Sciatic nerve (tissue), 2 donors: ENCODE measurements at regions of chr1 and their contacts with region 1.

Region 1: GRCh38 chr1:23825762-23826522 is 713 bp upstream of the HMGCL start:
- DNase-seq: no peak
- ATAC-seq: peak; percentile 14

Region 2: DNA sequence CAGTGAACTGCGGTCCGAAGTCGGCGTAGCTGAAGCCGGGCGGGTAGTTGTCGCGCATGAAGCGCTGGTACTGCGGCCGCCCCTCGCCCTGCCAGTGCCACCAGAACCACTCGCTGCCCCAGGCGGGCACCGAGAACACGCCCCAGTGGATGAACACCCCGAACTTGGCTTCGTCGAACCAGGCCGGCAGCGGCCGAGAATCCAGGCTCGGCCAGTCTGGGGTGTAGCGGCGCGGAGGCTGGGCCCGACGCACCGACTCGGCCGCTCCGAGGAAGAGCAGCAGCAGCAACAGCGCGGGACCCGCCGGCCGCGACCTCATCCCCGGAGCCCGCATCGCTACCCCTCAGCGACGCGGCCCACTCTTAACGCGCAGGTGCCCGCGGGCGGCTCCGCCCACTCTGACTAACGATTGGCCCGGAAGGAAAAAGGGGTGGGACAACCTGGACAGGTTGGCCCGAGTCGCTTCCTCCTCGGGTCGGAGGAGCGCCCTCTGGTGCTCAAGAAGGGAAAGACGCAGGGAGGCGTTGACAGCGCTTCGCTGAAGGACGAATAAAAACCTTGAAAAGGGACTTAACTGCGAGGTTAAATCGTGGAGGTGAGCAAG is 42.1 kb after region 1 on chr1 and contains the start of gene FUCA1:
- intact Hi-C with region 1: loop called (anchors 1 kb)
- DNase-seq: peak; percentile 96
- ATAC-seq: peak; percentile 98
- total RNA-seq, gene FUCA1: 22.3 TPM